Natural killer cell (primary cell): ENCODE measurements at regions of chr5 and their contacts with region 1.

Region 1: DNA sequence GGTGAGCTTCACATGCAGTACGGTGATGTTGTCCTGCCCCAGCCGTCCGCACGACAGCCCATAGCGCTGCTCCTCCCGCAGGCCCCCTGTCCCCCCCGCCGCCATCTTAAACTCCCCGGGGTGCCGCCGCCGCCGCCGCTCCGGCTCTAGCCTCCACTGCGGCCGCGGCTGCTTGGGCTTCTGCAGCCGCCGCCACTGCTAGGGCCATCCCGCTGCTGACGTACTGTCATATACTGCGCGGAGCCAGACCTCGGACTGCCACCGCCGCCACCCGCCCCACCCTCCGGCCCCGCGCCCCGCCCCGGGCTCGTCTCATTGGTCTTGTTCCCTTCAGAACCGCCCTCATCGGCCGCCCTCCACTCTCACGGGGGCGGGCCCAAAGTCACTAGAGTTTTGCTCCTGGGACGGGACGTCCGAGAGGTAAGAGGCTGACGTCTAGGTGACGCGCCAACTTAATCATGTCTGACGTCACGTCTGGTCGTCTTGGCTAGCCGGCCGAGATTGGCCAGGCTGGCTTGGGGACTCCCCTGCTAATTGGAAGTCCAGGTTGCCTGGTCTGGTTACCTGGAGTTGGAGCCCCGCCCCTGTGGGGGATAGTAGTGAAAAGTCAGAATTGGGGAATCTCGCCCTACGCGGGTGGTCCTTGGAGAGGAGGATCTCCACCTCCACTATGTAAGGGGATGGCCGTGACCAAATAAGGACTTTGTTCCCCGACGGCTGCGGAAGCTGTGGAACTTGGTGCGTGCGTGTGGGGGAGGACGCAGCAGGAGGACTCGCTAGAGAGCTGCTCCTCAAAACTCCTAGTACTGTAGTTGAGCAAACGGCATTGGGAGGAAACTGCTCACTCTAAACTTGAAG is at the start of gene ELL2:
- DNase-seq: peak; percentile 93 to 98
- ATAC-seq: peak; percentile 83 to 94 (median 85)
- H3K4me3 ChIP-seq: peak within 1 kb of the TSS; percentile 96
- H3K4me3 Mint-ChIP-seq: peak within 1 kb of the TSS; percentile 95
- H3K27ac ChIP-seq: peak within 1 kb of the TSS; percentile 96
- H3K27ac Mint-ChIP-seq: peak within 1 kb of the TSS; percentile 99
- H3K4me1 ChIP-seq: peaks cover 30% of the 10 kb centered on the region
- H3K4me1 Mint-ChIP-seq: peaks cover 31 to 32% of the 10 kb centered on the region in 2 donors
- H3K27me3 ChIP-seq: no peaks in the 10 kb centered on the region
- H3K27me3 Mint-ChIP-seq: peaks cover 14 to 16% of the 10 kb centered on the region in 2 donors
- CTCF ChIP-seq: no peak
- total RNA-seq, gene ELL2: 52.8 to 78.2 (median 69.4) TPM

Region 2: GRCh38 chr5:95858661-95859326 is 103.1 kb before region 1 on chr5:
- intact Hi-C with region 1: loop called (anchors 5 kb)
- DNase-seq: peak; percentile 83 to 92
- ATAC-seq: peak; percentile 96 to 97 (median 96)
- H3K4me3 ChIP-seq: no peak overlapping the region
- H3K4me3 Mint-ChIP-seq: peak overlapping the region; percentile 35
- H3K27ac ChIP-seq: no peak overlapping the region
- H3K27ac Mint-ChIP-seq: peak overlapping the region; percentile 8 to 61
- H3K4me1 ChIP-seq: peaks cover 19% of the 10 kb centered on the region
- H3K4me1 Mint-ChIP-seq: peaks cover 7 to 17% of the 10 kb centered on the region in 2 donors
- H3K27me3 ChIP-seq: peaks cover 2% of the 10 kb centered on the region
- H3K27me3 Mint-ChIP-seq: peaks cover 31 to 46% of the 10 kb centered on the region in 2 donors
- CTCF ChIP-seq: peak; percentile 97

Region 3: DNA sequence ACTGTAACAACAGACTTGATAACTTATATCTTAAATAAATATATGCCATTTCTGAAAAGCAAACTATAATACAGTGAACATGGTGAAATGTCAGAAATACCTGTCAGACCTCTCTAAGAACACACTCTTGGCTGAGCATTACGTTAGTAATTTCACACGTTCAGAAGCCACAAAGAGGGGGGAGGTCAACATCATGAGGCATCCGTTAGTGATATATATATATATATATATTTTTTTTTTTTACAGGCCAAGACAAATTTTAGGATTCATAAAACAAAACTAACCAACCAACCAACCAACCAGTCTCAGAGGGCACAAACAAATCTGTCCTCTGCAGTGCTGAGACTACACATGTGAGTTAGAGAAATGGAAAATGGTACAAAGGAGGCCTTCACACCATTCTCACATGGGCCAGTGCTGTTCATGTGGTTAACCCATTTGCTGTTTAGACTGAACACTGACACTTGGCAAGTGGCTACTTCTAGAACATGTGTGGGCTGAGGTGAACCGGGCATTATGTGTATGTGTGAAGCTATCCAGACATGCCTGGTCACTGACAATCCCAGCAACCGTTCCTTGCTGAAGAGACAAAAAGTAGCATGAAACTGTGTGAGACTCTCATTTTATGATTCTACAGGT is 54.7 kb before region 1 on chr5:
- intact Hi-C with region 1: loop called (anchors 5 kb)
- DNase-seq: peak in 1 of 2 donors; percentile 52
- ATAC-seq: peak; percentile 73 to 82 (median 78)
- H3K4me3 ChIP-seq: no peak overlapping the region
- H3K4me3 Mint-ChIP-seq: peak overlapping the region; percentile 22
- H3K27ac ChIP-seq: peak overlapping the region; percentile 36
- H3K27ac Mint-ChIP-seq: peak overlapping the region; percentile 71 to 75
- H3K4me1 ChIP-seq: peaks cover 14% of the 10 kb centered on the region
- H3K4me1 Mint-ChIP-seq: peaks cover 30% of the 10 kb centered on the region in 2 donors
- H3K27me3 ChIP-seq: no peaks in the 10 kb centered on the region
- H3K27me3 Mint-ChIP-seq: peaks cover 0 to 6% of the 10 kb centered on the region in 2 donors
- CTCF ChIP-seq: no peak

Region 4: DNA sequence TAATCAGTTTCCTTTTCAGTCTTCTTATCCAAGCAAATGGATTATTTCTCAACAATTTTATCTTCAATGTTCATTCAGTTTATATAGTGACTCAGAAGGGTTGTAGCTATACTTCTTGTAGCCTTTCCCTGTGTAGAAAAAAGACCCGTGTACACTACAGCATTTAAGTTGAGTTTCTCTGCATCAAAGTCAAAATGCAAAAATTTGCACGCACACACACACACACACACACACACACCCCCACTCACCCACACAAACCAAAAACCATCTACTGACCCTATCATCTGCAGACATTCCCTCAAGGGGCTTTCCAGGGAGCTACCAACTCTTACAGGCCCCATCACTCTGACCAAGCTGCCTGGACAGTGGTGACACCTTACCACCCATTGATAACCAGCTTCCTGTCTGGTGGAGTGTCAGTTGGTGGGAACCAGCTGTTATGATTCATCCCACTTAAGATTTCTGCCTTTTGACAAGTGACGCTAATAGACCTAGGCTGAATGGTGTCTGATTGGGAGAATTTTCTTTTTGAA is 12.0 kb after region 1 on chr5:
- intact Hi-C with region 1: loop called (anchors 1 kb)
- DNase-seq: peak; percentile 66
- ATAC-seq: peak; percentile 94 to 98 (median 98)
- H3K4me3 ChIP-seq: no peak overlapping the region
- H3K4me3 Mint-ChIP-seq: peak overlapping the region; percentile 67
- H3K27ac ChIP-seq: no peak overlapping the region
- H3K27ac Mint-ChIP-seq: peak overlapping the region; percentile 85 to 87
- H3K4me1 ChIP-seq: peaks cover 6% of the 10 kb centered on the region
- H3K4me1 Mint-ChIP-seq: peaks cover 20 to 21% of the 10 kb centered on the region in 2 donors
- H3K27me3 ChIP-seq: no peaks in the 10 kb centered on the region
- H3K27me3 Mint-ChIP-seq: peaks cover 0 to 15% of the 10 kb centered on the region in 2 donors
- CTCF ChIP-seq: no peak

Region 5: GRCh38 chr5:96662725-96663513 is 701.1 kb after region 1 on chr5:
- intact Hi-C with region 1: loop called (anchors 2 kb)
- DNase-seq: peak; percentile 82 to 88
- ATAC-seq: peak; percentile 64 to 81 (median 68)
- H3K4me3 ChIP-seq: peak overlapping the region; percentile 83
- H3K4me3 Mint-ChIP-seq: peak overlapping the region; percentile 95
- H3K27ac ChIP-seq: peak overlapping the region; percentile 96
- H3K27ac Mint-ChIP-seq: peak overlapping the region; percentile 98 to 99
- H3K4me1 ChIP-seq: peaks cover 33% of the 10 kb centered on the region
- H3K4me1 Mint-ChIP-seq: peaks cover 74 to 80% of the 10 kb centered on the region in 2 donors
- H3K27me3 ChIP-seq: no peaks in the 10 kb centered on the region
- H3K27me3 Mint-ChIP-seq: no peaks in the 10 kb centered on the region
- CTCF ChIP-seq: no peak